GM12878 (cell line): ENCODE measurements at regions of chr2 and their contacts with region 1.

Region 1: DNA sequence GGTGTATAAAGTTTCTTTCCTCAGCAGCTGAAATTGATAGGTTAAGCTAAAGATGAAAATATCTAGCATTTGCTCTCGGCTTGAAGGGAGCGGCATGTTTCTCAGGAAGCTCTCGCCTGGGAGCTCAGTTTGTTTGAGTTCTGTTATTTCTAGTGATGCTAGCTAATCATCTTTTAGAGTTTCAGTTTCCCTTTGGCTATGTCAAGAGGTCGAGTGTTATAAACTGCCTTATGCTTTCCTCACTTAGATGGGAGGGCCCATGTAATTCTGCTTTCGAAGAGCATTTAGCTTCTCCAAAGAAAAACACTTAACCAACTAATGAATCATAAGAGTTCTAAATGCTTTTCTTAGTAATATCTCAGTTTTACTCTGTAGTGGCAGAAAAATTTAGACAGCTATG is 33.6 kb downstream of the PLCL1 start:
- DNase-seq: peak; percentile 30
- ATAC-seq: peak; percentile 97
- H3K4me3 ChIP-seq: no peak overlapping the region
- H3K27ac ChIP-seq: no peak overlapping the region
- H3K4me1 ChIP-seq: no peaks in the 10 kb centered on the region
- H3K27me3 ChIP-seq: no peaks in the 10 kb centered on the region
- CTCF ChIP-seq: no peak
- EP300 ChIP-seq: no peak
- POLR2A ChIP-seq: no peak
- RAD21 ChIP-seq: no peak

Region 2: DNA sequence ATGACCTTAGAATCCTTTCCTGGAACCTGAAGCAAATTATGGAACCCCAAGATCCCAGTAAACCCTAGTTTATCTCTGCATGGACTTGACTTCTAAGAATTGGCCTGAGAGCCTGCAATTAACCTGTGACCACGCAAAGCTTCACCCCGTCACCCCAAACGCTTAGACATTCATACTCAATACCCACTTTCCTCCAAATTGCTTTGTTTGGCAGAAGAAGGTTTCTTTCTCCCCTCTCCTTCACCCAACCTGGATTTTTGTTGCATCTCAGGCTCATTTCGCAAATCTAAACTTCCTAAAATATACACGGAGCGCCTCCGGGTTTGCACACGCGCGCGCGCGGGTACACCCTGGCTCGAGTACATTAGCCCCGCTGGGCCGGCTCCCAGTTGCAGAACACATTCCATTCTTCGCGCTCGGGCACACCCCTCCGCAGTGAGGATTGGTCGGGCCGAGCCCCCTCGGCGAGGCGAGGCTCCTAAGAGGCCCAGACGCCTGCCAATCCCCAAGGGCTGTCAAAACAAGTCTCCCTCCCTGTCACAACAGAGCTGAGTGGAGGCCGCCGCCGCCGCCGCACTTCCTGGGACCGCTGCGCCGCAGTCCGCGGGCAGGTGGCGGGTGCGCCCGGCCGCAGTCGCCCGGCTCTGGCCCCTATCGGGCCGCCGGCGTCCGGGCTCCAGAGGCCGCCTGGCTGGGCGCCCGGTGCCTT is 33.8 kb before region 1 on chr2 and contains the start of gene PLCL1:
- CTCF ChIA-PET with region 1: interaction called, 7 read pairs
- POLR2A ChIA-PET with region 1: interaction called, 4 read pairs
- RAD21 ChIA-PET with region 1: interaction called, 7 read pairs
- SMC1A ChIA-PET with region 1: interaction called, 14 read pairs
- in situ Hi-C with region 1: no loop called
- intact Hi-C with region 1: no loop called
- DNase-seq: peak; percentile 40
- ATAC-seq: peak; percentile 99
- H3K4me3 ChIP-seq: peak within 1 kb of the TSS; percentile 62
- H3K27ac ChIP-seq: no peak within 1 kb of the TSS
- H3K4me1 ChIP-seq: no peaks in the 10 kb centered on the region
- H3K27me3 ChIP-seq: peaks cover 4 to 19% of the 10 kb centered on the region in 2 experiments
- CTCF ChIP-seq: 0 out of 6 replicates have a peak, but pooled peaks of 1 of the 3 experiments have one; percentile 2
- EP300 ChIP-seq: no peak
- POLR2A ChIP-seq: no peak
- RAD21 ChIP-seq: no peak
- polyA plus RNA-seq, gene PLCL1: 0.03 to 0.05 TPM